ENCODE measurements at regions of chr5 and their contacts with region 1.

Region 1: DNA sequence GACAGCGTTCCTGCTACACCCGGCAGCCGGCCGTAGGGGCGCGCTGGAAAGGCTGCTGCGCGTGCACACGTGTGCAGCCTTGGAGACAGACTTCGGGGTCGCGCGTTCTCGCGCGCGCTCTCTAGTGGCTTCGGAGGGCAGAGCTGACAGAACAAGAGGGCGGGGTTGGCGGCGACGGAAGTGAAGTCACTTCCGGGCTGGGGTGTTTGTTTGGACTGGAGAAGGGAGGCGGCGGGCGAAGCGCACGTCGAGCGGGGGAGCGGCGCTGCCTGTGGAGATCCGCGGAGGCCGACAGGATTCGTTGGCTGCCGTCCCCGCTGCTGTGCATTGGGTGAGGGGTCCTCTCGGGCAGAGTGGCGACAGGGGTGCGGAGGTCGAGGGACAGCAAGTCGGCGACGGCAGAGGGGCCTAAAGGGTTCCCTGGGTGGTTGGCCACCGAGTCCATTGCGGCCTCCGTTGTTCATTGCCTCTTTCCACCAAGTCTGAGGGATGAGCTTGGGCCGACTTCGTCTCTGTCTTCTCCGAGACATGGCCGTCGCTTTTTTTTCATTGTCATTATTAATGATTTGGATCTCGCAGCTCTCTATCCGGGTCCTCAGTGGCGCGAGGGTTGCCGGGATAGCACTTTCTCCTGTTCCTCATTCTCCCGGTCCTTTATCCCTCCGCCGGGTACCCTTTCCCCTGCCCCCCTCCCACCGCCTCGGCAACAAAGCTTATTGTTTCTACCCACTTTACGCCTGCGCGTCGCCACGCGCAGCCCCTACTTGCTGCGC is at the start of gene PAIP2:
- DNase-seq: peak; percentile 98 to 99 (median 99)
- H3K4me3 ChIP-seq: peak within 1 kb of the TSS; percentile 72 to 97 (median 94)
- H3K27ac ChIP-seq: peak within 1 kb of the TSS; percentile 98 to 99
- H3K4me1 ChIP-seq: peaks cover 11 to 33% (median 25%) of the 10 kb centered on the region in 4 experiments
- H3K27me3 ChIP-seq: no peaks in the 10 kb centered on the region

Region 2: GRCh38 chr5:139293504-139294373 is 48.1 kb before region 1 on chr5 and contains the start of gene MATR3:
- CTCF ChIA-PET with region 1: interaction called, 4 read pairs
- POLR2A ChIA-PET with region 1: interaction called, 13 read pairs
- DNase-seq: peak; percentile 93 to 95 (median 95)
- H3K4me3 ChIP-seq: peak within 1 kb of the TSS; percentile 81 to 100 (median 90)
- H3K27ac ChIP-seq: peak within 1 kb of the TSS; percentile 99
- H3K4me1 ChIP-seq: peaks cover 11 to 38% (median 22%) of the 10 kb centered on the region in 4 experiments
- H3K27me3 ChIP-seq: no peaks in the 10 kb centered on the region

Region 3: DNA sequence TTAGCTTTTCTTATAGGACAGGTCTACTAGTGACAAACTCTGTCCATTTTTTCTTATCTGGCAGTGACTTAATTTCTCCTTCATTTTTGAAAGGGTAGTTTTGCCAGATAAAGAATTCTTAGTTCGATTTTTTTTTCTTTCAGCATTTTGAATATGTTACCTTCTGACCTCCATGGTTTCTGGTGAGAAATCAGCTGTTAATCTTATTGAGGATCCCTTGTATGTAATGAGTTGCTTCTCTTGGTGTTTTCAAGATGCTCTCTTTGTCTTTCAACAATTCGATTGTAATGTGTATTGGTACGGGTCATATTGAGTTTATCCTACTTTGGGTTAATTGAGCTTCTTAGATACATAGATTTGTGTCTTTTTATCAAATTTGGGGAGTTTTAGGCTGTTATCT is 12.3 kb after region 1 on chr5:
- CTCF ChIA-PET with region 1: interaction called, 11 read pairs
- POLR2A ChIA-PET with region 1: interaction called, 5 read pairs
- DNase-seq: no peak
- H3K4me3 ChIP-seq: no peak overlapping the region
- H3K27ac ChIP-seq: no peak overlapping the region
- H3K4me1 ChIP-seq: no peaks in the 10 kb centered on the region
- H3K27me3 ChIP-seq: no peaks in the 10 kb centered on the region

Region 4: GRCh38 chr5:139385061-139386049 is 43.5 kb after region 1 on chr5:
- CTCF ChIA-PET with region 1: interaction called, 6 read pairs
- POLR2A ChIA-PET with region 1: interaction called, 11 read pairs
- DNase-seq: peak in 2 of 3 donors; percentile 51 to 59
- H3K4me3 ChIP-seq: peak overlapping the region; percentile 24 to 77 (median 67)
- H3K27ac ChIP-seq: peak overlapping the region; percentile 72 to 95
- H3K4me1 ChIP-seq: peaks cover 6 to 84% (median 80%) of the 10 kb centered on the region in 4 experiments
- H3K27me3 ChIP-seq: no peaks in the 10 kb centered on the region

Region 5: GRCh38 chr5:139392678-139393496 is 51.1 kb after region 1 on chr5:
- CTCF ChIA-PET with region 1: interaction called, 10 read pairs
- POLR2A ChIA-PET with region 1: interaction called, 11 read pairs
- DNase-seq: peak; percentile 91 to 93 (median 92)
- H3K4me3 ChIP-seq: peak overlapping the region; percentile 47 to 81 (median 72)
- H3K27ac ChIP-seq: peak overlapping the region in 1 of 2 experiments; percentile 95
- H3K4me1 ChIP-seq: peaks cover 0 to 73% (median 68%) of the 10 kb centered on the region in 4 experiments
- H3K27me3 ChIP-seq: no peaks in the 10 kb centered on the region

Region 6: DNA sequence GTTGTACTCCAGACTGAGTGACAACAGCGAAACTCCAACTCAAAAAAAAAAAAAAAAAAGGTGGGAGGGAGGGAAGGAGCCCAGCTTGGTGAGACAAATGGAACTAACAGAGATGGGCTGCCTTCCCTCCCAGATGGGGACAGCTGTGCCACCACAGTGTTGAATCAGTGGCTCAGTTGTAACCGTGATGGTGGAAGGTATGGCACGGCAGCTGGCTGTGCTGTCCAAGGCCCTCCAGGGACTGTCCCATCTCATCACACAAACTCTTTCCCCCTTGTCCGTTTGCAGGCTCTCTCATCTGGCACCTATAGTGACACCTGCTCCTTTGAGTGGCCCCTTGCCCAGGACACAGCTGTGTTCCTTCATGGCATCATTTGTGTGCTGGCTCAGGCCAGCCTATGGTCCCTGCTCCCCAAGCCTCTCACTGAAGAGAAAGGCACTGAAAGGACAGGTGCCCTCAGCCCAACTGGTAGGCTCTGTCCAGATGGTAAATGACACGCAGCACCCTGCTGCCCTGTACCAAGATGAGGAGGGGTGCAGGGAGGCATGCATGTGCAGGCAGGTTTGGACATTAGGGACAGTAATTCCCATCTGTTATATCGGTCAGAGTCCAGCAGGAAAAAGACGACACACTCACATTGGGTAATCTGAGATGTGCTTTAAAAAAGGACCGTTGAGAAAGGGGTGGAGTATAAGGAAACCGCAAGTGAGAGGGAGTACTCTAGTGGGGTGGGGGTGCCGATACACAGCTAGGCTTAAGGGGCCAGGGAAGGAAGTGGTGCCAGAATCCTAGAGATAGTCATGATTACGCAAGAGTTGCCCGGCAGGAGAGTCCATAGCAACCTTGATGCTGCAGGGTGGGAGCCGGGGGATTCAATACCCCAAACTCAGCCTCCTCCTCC is 133.3 kb after region 1 on chr5:
- CTCF ChIA-PET with region 1: no interaction called
- POLR2A ChIA-PET with region 1: no interaction called
- DNase-seq: peak; percentile 84 to 96 (median 95)
- H3K4me3 ChIP-seq: peak overlapping the region in 4 of 7 experiments; percentile 21 to 50 (median 38)
- H3K27ac ChIP-seq: peak overlapping the region; percentile 71 to 84
- H3K4me1 ChIP-seq: peaks cover 10 to 96% (median 92%) of the 10 kb centered on the region in 4 experiments
- H3K27me3 ChIP-seq: no peaks in the 10 kb centered on the region

Region 7: DNA sequence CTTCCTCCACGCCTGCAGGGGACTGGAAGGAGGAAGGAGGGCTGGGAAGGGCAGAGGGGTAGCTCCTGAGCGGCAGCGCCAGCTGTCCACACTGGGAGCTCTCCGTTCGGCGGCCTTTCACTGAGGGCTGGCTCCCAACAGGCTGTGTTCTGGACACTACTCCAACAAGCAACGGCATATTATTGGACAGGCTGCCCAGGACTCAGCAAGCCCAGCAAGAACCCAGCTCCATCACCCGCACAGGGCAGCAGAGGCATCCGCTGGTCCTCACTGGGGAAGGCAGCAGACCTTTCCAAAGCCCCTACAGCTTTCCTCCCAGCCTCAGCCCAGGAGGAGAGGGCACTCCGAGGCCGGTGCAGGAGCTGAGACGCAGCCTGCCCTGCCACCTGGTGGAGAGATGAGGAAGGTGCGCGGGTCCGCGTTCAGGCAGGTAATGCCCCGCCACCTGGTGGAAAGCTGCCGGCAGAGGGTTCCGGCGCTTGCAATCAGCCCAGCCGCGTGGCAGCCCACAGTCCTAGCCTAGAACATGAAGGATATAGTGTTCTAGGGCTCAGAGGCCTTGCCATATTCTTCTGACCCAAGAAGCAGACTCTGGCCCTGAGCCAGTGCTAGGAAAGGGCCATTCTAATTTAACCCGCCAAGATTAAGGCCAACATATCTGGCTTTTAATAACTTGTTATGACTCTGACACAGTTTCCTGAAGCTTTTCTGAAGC is 626.9 kb after region 1 on chr5:
- CTCF ChIA-PET with region 1: no interaction called
- POLR2A ChIA-PET with region 1: no interaction called
- DNase-seq: peak; percentile 78 to 87 (median 84)
- H3K4me3 ChIP-seq: no peak overlapping the region
- H3K27ac ChIP-seq: no peak overlapping the region
- H3K4me1 ChIP-seq: peaks cover 0 to 2% (median 0%) of the 10 kb centered on the region in 4 experiments
- H3K27me3 ChIP-seq: peaks cover 0 to 27% (median 2%) of the 10 kb centered on the region in 5 experiments